SK-N-SH (cell line): ENCODE measurements at regions of chr16 and their contacts with region 1.

Region 1: GRCh38 chr16:50665128-50665878 is 15.8 kb downstream of the SNX20 start:
- DNase-seq: peak; percentile 84
- H3K4me3 ChIP-seq: peak overlapping the region in 1 of 2 experiments; percentile 45; a peak in 2 of 4 replicates
- H3K27ac ChIP-seq: no peak overlapping the region
- H3K4me1 ChIP-seq: no peaks in the 10 kb centered on the region; a peak in 1 of 4 replicates
- H3K27me3 ChIP-seq: no peaks in the 10 kb centered on the region
- CTCF ChIP-seq: peak; percentile 79
- EP300 ChIP-seq: no peak
- RAD21 ChIP-seq: peak; percentile 94

Region 2: GRCh38 chr16:50024684-50025536 is 640.4 kb before region 1 on chr16 and contains the start of gene CNEP1R1:
- CTCF ChIA-PET with region 1: interaction called, 15 read pairs
- POLR2A ChIA-PET with region 1: no interaction called
- DNase-seq: peak; percentile 99
- H3K4me3 ChIP-seq: peak within 1 kb of the TSS; percentile 84 to 89
- H3K27ac ChIP-seq: peak within 1 kb of the TSS; percentile 21 to 81; a peak in 3 of 4 replicates
- H3K4me1 ChIP-seq: peaks cover 5 to 14% of the 10 kb centered on the region in 2 experiments; a peak in 3 of 4 replicates
- H3K27me3 ChIP-seq: no peaks in the 10 kb centered on the region
- CTCF ChIP-seq: peak; percentile 99
- EP300 ChIP-seq: no peak; a peak in 1 of 4 replicates
- RAD21 ChIP-seq: peak; percentile 88
- polyA plus RNA-seq, gene CNEP1R1: 19.2 and 21.6 TPM in 2 replicates

Region 3: DNA sequence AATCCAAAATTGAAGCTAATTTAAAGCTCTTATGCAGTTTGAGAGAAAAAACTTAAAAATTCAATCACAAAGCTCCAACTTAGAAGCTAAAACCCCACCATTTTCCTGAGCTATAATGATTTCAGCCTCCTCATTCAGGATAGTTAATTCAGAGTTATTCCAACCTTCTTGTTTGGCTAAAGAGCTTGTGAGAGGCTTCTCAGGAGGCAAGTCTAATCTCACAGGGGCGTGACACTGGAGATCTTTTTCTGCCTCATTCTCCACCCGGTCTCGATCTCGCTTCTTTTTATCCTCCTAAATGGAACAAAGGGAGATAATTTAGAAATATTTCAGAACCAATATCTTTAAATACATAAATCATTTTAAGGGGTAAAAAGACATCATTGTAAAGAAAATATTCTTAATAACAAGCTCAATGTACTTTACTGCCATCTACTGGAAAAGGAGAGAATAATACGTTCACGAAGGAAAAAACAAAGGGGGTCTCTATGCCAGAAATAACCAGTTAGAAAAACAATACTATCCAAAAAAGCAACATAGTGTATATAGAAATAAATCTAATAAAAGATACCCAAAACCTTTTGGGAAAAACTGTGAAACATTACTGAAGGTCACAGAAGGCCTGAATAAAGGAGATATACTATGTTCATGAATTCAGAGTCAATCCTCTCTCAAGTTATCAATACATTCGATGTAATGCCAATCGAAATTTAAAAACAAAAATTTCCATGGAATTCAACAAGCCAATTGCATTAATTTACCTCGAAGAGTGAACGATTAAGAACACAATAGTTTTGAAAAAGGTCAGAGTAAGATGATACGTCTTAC is 310.5 kb before region 1 on chr16:
- CTCF ChIA-PET with region 1: interaction called, 10 read pairs
- POLR2A ChIA-PET with region 1: no interaction called
- DNase-seq: peak; percentile 58
- H3K4me3 ChIP-seq: no peak overlapping the region
- H3K27ac ChIP-seq: no peak overlapping the region
- H3K4me1 ChIP-seq: no peaks in the 10 kb centered on the region; a peak in 1 of 4 replicates
- H3K27me3 ChIP-seq: no peaks in the 10 kb centered on the region
- CTCF ChIP-seq: peak; percentile 84
- EP300 ChIP-seq: no peak
- RAD21 ChIP-seq: peak; percentile 60

Region 4: GRCh38 chr16:50381679-50382440 is 283.4 kb before region 1 on chr16:
- CTCF ChIA-PET with region 1: interaction called, 326 read pairs
- POLR2A ChIA-PET with region 1: no interaction called
- DNase-seq: no peak
- H3K4me3 ChIP-seq: no peak overlapping the region
- H3K27ac ChIP-seq: no peak overlapping the region
- H3K4me1 ChIP-seq: peaks cover 0 to 11% of the 10 kb centered on the region in 2 experiments; a peak in 1 of 4 replicates
- H3K27me3 ChIP-seq: peaks cover 3% of the 10 kb centered on the region; the same call in 1 of the 2 replicates
- CTCF ChIP-seq: peak; percentile 12; the same call in 1 of the 2 replicates
- EP300 ChIP-seq: no peak
- RAD21 ChIP-seq: no peak

Region 5: GRCh38 chr16:50548125-50548908 is 117.0 kb before region 1 on chr16 and contains the start of gene NKD1:
- CTCF ChIA-PET with region 1: interaction called, 21 read pairs
- POLR2A ChIA-PET with region 1: no interaction called
- DNase-seq: peak; percentile 97
- H3K4me3 ChIP-seq: peak within 1 kb of the TSS; percentile 57 to 68
- H3K27ac ChIP-seq: peak within 1 kb of the TSS in 1 of 2 experiments; percentile 22; a peak in 1 of 4 replicates
- H3K4me1 ChIP-seq: peaks cover 0 to 9% of the 10 kb centered on the region in 2 experiments; a peak in 1 of 4 replicates
- H3K27me3 ChIP-seq: peaks cover 48% of the 10 kb centered on the region
- CTCF ChIP-seq: no peak
- EP300 ChIP-seq: no peak
- RAD21 ChIP-seq: no peak
- polyA plus RNA-seq, gene NKD1: 0.02 and 0.13 TPM in 2 replicates

Region 6: GRCh38 chr16:50573279-50573678 is 92.0 kb before region 1 on chr16:
- CTCF ChIA-PET with region 1: no interaction called
- POLR2A ChIA-PET with region 1: no interaction called
- DNase-seq: no peak
- H3K4me3 ChIP-seq: no peak overlapping the region
- H3K27ac ChIP-seq: no peak overlapping the region
- H3K4me1 ChIP-seq: peaks cover 0 to 5% of the 10 kb centered on the region in 2 experiments; a peak in 1 of 4 replicates
- H3K27me3 ChIP-seq: no peaks in the 10 kb centered on the region
- CTCF ChIP-seq: no peak
- EP300 ChIP-seq: no peak
- RAD21 ChIP-seq: no peak

Region 7: DNA sequence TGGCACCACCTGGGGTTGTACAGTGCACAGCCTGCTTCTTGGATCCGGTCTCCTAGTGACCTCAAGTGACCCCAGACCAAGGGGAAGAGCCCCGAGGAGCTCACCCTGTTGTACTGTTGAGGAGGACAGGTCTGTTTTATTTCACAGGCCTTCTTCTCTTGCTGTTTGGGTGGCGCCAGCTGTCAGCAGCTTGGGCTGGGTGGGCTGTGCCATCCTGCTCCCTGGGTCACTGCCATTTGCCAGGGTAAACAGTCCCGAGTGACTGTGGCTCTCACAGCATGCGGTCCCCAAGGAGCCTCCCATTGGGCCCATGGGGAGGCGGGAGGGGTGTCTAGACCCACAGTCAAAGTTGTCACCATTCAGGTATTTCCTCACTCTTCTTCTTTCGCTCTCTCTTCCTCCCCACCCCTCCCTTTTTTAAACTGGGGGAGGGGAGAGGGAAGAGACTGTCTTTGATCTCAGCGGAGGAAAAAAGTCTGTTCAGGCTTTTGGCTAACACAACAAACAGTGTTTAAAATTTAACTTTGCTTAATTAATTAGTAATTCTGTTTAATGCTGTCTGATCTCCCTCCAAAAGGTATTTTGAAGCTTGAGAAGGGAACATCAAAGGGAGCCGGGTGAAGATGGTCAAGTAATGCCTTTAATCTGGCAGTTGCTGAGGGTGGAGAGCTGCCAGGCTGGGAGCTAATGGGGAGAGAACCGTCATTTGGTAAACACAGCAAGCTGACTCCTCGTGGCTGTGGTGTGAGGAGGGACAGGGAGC is 48.2 kb before region 1 on chr16:
- CTCF ChIA-PET with region 1: interaction called, 14 read pairs
- POLR2A ChIA-PET with region 1: no interaction called
- DNase-seq: no peak
- H3K4me3 ChIP-seq: no peak overlapping the region
- H3K27ac ChIP-seq: no peak overlapping the region; a peak in 1 of 4 replicates
- H3K4me1 ChIP-seq: peaks cover 0 to 22% of the 10 kb centered on the region in 2 experiments; a peak in 2 of 4 replicates
- H3K27me3 ChIP-seq: no peaks in the 10 kb centered on the region
- CTCF ChIP-seq: no peak
- EP300 ChIP-seq: no peak
- RAD21 ChIP-seq: no peak

Region 8: DNA sequence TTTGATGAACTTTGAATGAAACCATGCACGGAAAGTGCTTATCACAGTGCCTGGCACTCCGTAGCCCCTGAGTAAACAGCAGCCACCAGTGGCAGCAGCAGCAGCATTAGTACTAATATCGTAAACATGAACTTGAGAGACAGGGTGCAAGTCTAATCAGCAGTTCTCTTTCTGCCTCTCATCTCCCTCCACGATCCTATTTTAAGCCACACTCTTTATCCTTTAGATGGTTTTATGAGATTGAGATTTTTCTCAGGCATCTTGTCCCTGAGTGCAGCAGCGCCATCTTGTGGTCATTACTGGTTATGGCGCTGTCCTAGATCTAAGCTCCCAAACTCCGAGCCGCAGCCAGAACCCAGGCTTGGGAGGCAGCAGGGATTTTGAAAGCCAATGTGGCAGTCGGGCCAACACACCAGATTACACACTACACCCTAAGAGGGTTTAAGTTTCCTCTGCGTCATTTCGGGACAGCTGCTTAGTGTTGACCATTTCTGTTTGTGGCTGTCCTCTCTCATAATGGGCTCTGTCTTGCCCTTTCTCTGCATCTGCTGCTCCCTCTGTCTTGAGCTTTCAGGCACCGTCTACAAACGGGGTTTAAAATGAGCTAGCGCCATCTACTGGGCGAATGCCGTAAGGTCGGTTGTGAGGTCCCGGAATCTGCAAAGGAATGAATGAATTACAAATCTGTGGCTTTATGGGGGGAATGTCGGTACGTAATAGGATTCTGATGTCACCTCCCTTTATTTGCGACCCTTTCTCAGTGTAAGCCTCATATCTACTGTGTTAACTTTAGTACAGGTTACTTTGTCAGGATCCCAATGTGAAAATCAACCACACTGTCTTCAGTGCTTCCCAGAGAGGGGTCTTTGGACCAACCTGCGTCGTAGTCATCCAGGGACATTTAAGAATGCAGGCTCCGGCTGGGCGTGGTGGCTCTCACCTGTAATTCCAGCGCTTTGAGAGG is 141.1 kb after region 1 on chr16:
- CTCF ChIA-PET with region 1: interaction called, 168 read pairs
- POLR2A ChIA-PET with region 1: no interaction called
- DNase-seq: peak; percentile 76
- H3K4me3 ChIP-seq: peak overlapping the region; percentile 42 to 61
- H3K27ac ChIP-seq: no peak overlapping the region; a peak in 1 of 4 replicates
- H3K4me1 ChIP-seq: peaks cover 0 to 3% of the 10 kb centered on the region in 2 experiments; a peak in 1 of 4 replicates
- H3K27me3 ChIP-seq: no peaks in the 10 kb centered on the region
- CTCF ChIP-seq: peak; percentile 96
- EP300 ChIP-seq: no peak
- RAD21 ChIP-seq: peak; percentile 77